Sciatic nerve (tissue), 2 donors: ENCODE measurements at regions of chr15 and their contacts with region 1.

Region 1: DNA sequence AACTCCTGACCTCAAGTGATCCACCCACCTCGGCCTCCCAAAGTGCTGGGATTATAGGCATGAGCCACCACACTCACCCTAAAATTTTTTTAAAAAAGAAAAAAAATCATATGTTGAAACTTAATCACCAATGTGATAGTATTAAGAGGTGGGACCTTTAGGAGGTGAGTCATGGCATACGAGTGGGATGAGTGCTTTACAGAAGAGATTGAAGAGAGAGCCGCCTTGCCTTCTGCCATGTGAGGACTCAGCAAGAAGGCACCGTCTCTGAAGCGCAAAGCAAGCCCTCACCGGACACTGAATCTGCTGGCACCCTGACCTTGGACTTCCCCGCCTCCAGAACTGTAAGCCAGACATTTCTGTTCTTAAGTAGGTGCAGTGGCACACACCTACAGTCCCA is 5.5 kb downstream of the ARPIN start:
- DNase-seq: no peak
- ATAC-seq: no peak

Region 2: GRCh38 chr15:90071208-90071807 is 164.0 kb after region 1 on chr15:
- intact Hi-C with region 1: loop called (anchors 5 kb)
- DNase-seq: peak; percentile 91
- ATAC-seq: peak; percentile 92